Activated CD8-positive, alpha-beta T cell treated with anti-CD3 and anti-CD28 coated beads, Interleukin-2, amount 10 ng/mL, durations not matched to agents 7 days and 5 days (primary cell): ENCODE measurements at regions of chr5 and their contacts with region 1.

Region 1: DNA sequence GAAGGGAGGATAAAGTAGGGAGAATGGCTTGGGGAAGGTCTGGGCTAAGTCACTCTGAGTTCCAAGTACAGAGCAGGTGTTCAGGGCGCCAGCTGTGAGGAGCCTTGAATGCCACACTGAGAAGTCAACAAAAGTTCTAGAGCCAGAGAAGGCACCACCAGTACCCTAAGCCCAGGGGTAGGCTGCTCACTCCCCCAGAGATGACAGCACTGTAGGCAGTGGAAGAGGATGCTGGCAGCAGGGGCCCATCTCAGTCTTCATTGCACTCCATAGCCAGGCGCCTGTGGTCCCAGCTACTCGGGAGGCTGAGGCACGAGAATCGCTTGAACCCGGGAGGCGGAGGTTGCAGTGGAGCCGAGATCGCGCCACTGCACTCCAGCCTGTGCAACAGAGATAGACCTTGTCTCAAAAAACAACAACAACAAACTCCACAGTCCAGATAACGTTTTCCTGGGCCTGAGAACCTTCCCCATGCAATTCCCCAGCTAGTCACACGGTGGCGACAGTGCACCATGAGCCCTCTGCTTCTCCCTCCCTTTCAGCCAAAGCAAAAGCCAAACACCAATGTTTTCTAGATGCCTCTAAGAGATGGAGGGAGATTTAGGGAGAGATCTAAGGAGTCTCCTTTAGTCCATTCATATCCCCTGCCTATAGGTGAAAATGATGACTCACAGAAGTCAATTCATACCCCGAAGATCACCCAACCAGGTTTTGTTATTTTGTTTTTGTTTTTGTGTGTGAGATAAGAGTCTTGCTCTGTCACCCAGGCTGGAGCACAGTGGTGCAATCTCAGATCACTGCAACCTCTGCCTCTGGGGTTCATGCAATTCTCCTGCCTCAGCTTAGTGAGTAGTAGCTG is 19.8 kb upstream of the NSD1 start:
- DNase-seq: peak; percentile 87
- ATAC-seq: peak; percentile 67
- H3K4me3 Mint-ChIP-seq: no peak overlapping the region
- H3K27ac Mint-ChIP-seq: peak overlapping the region; percentile 45
- H3K4me1 Mint-ChIP-seq: peaks cover 27% of the 10 kb centered on the region
- H3K27me3 Mint-ChIP-seq: no peaks in the 10 kb centered on the region

Region 2: DNA sequence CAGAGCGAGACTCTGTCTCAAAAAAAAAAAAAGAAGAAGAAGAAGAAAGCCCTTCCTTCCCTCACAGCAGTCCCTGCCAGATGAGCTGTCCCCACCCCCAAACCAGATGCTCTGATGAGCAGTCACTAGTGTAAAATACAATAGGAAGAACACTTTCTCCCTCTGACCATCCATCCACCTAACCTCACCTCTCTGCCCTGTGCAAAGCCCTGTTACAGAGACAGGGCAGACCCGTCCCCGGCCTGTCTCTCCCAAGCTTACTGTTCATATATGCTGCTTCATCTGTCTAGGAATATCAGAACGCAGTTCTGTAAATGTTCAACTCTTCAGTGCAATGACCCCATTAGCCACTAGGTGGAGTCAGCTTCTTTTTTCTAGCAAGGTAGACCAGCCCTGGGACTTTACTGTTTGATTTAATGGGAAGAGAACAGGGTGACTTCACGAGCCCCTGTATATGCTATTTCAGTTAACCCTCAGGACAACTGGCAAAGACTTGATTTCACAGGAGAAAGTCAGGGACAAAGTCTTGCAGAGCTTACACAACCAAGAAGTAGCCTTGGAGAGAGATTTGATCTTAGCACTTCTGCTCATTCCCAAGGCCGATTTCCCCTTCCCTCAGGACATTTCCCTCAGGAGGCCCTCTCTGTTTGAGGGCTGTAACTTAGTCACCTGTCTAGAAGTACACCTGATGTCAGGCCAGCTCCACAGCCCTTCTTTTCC is 42.0 kb before region 1 on chr5:
- CTCF ChIA-PET with region 1: interaction called, 57 read pairs
- POLR2A ChIA-PET with region 1: no interaction called
- DNase-seq: peak; percentile 84
- ATAC-seq: peak; percentile 84
- H3K4me3 Mint-ChIP-seq: no peak overlapping the region
- H3K27ac Mint-ChIP-seq: no peak overlapping the region
- H3K4me1 Mint-ChIP-seq: peaks cover 11% of the 10 kb centered on the region
- H3K27me3 Mint-ChIP-seq: no peaks in the 10 kb centered on the region

Region 3: GRCh38 chr5:177126771-177127170 is 13.0 kb after region 1 on chr5:
- CTCF ChIA-PET with region 1: interaction called, 21 read pairs
- POLR2A ChIA-PET with region 1: no interaction called
- DNase-seq: no peak
- ATAC-seq: no peak
- H3K4me3 Mint-ChIP-seq: no peak overlapping the region
- H3K27ac Mint-ChIP-seq: no peak overlapping the region
- H3K4me1 Mint-ChIP-seq: peaks cover 32% of the 10 kb centered on the region
- H3K27me3 Mint-ChIP-seq: peaks cover 3% of the 10 kb centered on the region

Region 4: DNA sequence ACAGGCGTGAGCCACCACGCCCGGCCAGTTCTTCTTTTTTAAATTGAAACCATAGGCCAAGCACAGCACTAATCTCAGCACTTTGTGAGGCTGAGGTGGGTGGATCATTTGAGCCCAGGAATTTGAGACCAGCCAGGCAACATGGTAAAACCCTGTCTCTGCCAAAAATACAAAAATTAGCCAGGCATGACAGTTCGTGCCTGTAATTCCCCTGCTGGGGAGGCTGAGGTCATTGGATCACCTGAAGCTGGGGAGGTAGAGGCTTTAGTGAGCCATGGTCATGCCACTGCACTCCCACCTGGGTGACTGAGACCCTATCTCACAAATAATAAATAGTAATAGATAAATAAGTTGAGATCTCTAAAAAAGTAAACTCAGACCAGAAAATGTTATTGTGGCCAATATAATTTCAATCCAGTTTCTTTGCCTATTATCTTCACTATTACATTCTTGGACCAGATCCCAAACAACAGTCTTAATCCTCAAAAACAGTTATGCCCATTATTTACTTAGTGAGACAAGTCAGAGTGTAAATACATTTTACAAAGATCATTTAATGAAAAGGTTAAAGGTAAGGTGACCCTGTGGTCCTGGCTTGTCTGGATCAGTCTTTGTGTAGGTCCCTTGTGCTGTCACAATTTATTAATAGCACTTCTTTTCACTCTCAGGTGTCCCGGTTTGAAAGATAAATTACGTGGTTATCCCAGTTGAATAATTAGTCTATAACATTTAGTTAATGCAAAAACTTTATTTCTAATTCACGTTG is 136.1 kb after region 1 on chr5:
- CTCF ChIA-PET with region 1: interaction called, 31 read pairs
- POLR2A ChIA-PET with region 1: no interaction called
- DNase-seq: no peak
- ATAC-seq: no peak
- H3K4me3 Mint-ChIP-seq: no peak overlapping the region
- H3K27ac Mint-ChIP-seq: no peak overlapping the region
- H3K4me1 Mint-ChIP-seq: no peaks in the 10 kb centered on the region
- H3K27me3 Mint-ChIP-seq: no peaks in the 10 kb centered on the region

Region 5: DNA sequence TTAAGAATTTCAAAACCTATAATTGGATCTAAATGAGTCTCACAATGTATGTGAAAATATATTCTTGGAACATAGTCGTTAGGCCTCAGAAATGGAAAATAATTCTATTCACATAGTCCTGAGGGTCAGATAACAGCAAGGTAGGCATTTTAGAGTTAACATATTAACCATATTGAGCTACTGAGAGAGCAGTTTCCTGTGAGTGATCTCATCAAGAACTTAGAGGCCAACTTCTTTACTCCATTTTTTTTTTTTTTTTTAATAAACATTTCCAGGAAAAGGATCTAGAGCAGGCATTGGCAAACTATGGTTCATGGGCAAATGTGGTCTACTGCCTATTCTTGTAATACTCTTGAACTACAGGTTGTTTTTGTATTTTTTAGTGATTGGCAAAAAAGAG is 163.1 kb after region 1 on chr5:
- CTCF ChIA-PET with region 1: interaction called, 13 read pairs
- POLR2A ChIA-PET with region 1: no interaction called
- DNase-seq: no peak
- ATAC-seq: no peak
- H3K4me3 Mint-ChIP-seq: no peak overlapping the region
- H3K27ac Mint-ChIP-seq: peak overlapping the region; percentile 2
- H3K4me1 Mint-ChIP-seq: peaks cover 13% of the 10 kb centered on the region
- H3K27me3 Mint-ChIP-seq: no peaks in the 10 kb centered on the region

Region 6: DNA sequence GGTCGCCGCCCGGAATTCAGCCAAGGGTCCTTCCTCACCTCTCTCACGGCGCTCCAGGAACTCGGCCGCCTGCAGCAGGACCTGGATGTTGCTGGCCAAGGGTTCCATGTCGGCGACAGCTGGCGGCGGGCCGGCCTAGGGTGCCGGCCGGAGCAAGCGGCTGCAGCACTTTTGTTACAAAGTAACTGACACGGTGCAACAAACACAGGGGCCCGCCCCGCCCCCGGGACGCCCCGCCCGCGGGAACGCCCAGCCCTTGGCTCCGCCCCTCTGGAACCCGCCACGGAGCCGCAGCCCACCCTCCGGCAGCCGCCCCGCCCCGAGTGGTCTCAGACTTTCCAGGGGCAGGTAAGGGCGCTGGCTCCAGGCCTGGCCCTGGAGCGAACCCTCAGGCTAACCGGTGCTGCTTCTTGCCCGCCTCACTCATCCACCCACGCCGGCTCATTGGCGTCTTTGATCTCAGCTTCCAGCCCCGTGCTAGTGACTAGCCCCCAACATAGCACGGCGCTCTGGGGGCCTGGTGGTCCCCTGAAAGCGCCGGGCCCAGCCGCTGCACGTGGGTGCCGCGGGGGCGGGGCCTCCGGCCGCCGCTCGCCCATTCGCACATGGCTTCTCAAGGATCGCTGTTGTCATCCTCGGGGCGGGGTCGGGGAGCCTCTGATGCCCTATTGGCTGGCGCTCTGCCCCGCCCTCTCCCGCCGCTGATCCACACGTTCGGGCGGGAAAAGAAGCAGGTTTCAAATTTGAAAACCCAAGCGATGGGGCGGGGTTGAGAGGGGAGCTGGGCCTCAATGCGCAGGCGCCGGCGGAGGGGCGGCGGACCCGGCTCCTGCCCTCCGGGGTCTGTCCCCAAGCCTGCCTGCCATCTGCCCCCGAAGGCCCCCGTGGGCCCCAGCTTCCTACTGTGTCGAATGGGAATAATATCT is 198.2 kb after region 1 on chr5 and contains the start of gene MXD3:
- CTCF ChIA-PET with region 1: interaction called, 49 read pairs
- POLR2A ChIA-PET with region 1: interaction called, 5 read pairs
- DNase-seq: peak; percentile 99
- ATAC-seq: peak; percentile 87
- H3K4me3 Mint-ChIP-seq: peak within 1 kb of the TSS; percentile 95
- H3K27ac Mint-ChIP-seq: peak within 1 kb of the TSS; percentile 93
- H3K4me1 Mint-ChIP-seq: peaks cover 55% of the 10 kb centered on the region
- H3K27me3 Mint-ChIP-seq: no peaks in the 10 kb centered on the region
- total RNA-seq, gene MXD3: 93.2 to 96.9 TPM